Ovary (tissue), 10 donors: ENCODE measurements at regions of chr10 and their contacts with region 1.

Region 1: DNA sequence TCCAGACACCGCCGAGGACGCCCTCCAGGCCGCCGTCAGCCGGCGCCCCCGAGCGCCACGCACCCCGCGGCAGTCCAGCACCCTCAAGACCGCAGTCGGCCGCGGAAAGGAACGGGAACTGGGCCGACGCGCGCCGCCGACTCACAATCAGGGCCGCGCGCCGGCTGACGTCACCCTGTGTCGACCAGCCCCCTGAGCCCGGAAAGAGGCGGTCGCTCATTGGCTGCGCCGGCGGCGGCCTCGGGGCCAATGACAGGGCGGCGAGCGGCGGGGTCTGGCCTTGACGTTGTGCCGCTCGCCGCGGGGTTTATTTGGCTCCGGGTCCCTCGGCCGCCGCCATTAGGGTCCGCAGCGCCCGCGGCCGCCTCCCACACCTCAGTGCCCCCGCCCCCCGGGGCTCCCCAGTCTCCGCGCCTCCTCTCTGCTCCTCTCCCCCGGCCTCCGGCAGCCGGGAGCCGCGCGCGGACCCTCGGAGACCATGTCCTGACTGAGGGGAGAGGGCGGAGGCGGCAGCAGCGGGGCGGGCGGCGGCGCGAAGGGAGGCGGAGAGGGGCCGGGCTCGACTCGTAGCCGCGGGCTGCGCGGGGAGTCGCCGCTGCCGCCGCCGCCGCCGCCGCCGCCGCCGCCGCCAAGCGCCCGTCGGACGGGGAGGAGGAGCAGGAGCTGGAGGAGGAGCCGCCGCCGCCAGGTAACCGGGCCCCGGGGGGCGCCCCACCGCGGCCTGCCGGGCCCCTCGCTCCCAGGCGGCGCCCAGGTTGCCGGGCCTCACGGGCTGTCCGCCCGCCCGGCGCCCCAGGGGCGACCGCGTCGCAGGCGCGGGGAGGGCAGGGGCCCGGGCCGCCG is 25.1 kb upstream of the ZRANB1 start:
- DNase-seq: peak; percentile 98 to 100 (median 99)
- H3K4me3 ChIP-seq: peak overlapping the region; percentile 77
- H3K27ac ChIP-seq: peak overlapping the region; percentile 97 to 98
- H3K4me1 ChIP-seq: peaks cover 6% of the 10 kb centered on the region
- H3K27me3 ChIP-seq: no peaks in the 10 kb centered on the region
- CTCF ChIP-seq: peak in 2 of 3 donors; percentile 14 to 23
- EP300 ChIP-seq: no peak
- POLR2A ChIP-seq: peak; percentile 95

Region 2: GRCh38 chr10:124820121-124820520 is 96.7 kb before region 1 on chr10:
- intact Hi-C with region 1: no loop called
- DNase-seq: no peak
- H3K4me3 ChIP-seq: no peak overlapping the region
- H3K27ac ChIP-seq: no peak overlapping the region
- H3K4me1 ChIP-seq: no peaks in the 10 kb centered on the region
- H3K27me3 ChIP-seq: no peaks in the 10 kb centered on the region
- CTCF ChIP-seq: no peak
- EP300 ChIP-seq: no peak
- POLR2A ChIP-seq: no peak

Region 3: DNA sequence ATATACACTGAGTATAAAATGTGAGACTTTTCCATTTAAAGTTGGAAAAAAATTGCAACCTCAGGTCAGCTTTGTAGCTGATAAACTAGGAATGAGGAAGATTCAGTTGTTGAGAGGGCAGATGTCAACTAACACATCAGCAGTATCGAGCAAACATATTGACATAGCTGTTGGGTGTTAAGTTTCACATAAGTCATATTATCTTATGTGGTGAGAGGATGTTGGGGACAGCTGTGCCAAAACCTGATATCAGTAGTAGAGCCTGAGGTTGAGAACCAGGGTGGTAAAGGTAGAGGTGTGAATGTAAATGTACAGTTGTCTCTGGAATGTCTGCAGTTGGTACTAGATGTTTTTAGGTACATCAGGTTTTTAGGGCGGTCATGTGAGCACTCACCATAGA is 30.1 kb after region 1 on chr10:
- intact Hi-C with region 1: no loop called
- DNase-seq: no peak
- H3K4me3 ChIP-seq: no peak overlapping the region
- H3K27ac ChIP-seq: no peak overlapping the region
- H3K4me1 ChIP-seq: peaks cover 34% of the 10 kb centered on the region
- H3K27me3 ChIP-seq: no peaks in the 10 kb centered on the region
- CTCF ChIP-seq: no peak
- EP300 ChIP-seq: no peak
- POLR2A ChIP-seq: no peak

Region 4: DNA sequence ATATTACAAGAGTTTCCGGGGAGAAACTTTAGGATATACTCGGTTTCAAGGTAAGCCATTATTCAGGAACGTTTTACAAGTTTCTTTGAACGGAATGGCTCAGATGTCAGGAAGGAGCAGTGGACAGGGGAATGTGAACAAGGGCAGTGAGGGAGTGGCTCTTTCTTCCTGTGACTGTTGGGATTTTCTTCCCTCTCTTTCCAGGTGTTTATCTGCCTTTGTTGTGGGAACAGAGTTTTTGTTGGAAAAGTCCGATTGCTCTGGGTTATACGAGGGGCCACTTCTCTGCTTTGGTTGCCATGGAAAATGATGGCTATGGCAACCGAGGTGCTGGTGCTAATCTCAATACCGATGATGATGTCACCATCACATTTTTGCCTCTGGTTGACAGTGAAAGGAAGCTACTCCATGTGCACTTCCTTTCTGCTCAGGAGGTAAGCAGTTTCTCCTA is 66.5 kb after region 1 on chr10:
- intact Hi-C with region 1: loop called in 1 of 4 experiments (anchors 10 kb)
- DNase-seq: no peak
- H3K4me3 ChIP-seq: no peak overlapping the region
- H3K27ac ChIP-seq: no peak overlapping the region
- H3K4me1 ChIP-seq: peaks cover 10% of the 10 kb centered on the region
- H3K27me3 ChIP-seq: no peaks in the 10 kb centered on the region
- CTCF ChIP-seq: no peak
- EP300 ChIP-seq: no peak
- POLR2A ChIP-seq: no peak

Region 5: GRCh38 chr10:124992462-124993344 is 75.9 kb after region 1 on chr10:
- intact Hi-C with region 1: loop called in 2 of 4 experiments (anchors 10 kb)
- DNase-seq: peak; percentile 84 to 93 (median 87)
- H3K4me3 ChIP-seq: no peak overlapping the region
- H3K27ac ChIP-seq: no peak overlapping the region
- H3K4me1 ChIP-seq: peaks cover 4% of the 10 kb centered on the region
- H3K27me3 ChIP-seq: no peaks in the 10 kb centered on the region
- CTCF ChIP-seq: peak; percentile 72 to 87 (median 76)
- EP300 ChIP-seq: no peak
- POLR2A ChIP-seq: no peak